Gastrocnemius medialis (tissue), 4 donors: ENCODE measurements at regions of chr11 and their contacts with region 1.

Region 1: DNA sequence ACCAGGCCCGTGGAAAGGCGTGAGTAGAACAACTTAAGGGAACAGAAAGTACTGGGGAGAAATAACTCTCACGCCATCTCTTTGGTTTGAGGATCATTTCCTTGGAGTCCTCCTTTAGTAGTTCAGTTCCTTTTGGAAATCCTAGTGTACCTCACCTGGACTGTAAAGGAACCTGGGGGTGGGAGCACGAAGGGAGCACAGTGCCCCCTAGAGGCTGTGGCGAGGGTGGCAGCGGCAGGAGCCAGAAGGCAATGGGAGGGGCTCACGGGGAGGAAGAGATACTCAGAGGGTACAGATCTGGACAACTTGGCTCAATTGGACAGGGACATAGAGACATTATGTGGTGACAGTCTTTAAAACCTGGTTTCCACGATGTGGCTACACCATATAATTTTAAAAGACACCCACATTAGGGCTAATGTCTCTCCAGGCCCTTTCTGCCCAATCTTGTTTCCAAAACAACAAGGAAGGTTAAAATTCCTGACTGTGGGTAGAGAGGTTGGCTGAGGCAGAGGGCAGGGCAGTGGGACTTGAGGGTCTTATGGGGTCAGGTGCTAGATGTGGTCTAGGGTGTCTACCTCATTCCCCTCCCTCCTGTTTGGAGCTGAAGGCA is 87.0 kb downstream of the CSNK2A3 start:
- DNase-seq: peak in 1 of 2 donors; percentile 38
- ATAC-seq: peak; percentile 55 to 81
- H3K4me3 ChIP-seq: no peak overlapping the region
- H3K27ac ChIP-seq: no peak overlapping the region
- H3K4me1 ChIP-seq: peaks cover 0 to 10% of the 10 kb centered on the region in 2 donors
- H3K27me3 ChIP-seq: no peaks in the 10 kb centered on the region
- CTCF ChIP-seq: peak; percentile 70 to 85 (median 76)
- POLR2A ChIP-seq: no peak

Region 2: DNA sequence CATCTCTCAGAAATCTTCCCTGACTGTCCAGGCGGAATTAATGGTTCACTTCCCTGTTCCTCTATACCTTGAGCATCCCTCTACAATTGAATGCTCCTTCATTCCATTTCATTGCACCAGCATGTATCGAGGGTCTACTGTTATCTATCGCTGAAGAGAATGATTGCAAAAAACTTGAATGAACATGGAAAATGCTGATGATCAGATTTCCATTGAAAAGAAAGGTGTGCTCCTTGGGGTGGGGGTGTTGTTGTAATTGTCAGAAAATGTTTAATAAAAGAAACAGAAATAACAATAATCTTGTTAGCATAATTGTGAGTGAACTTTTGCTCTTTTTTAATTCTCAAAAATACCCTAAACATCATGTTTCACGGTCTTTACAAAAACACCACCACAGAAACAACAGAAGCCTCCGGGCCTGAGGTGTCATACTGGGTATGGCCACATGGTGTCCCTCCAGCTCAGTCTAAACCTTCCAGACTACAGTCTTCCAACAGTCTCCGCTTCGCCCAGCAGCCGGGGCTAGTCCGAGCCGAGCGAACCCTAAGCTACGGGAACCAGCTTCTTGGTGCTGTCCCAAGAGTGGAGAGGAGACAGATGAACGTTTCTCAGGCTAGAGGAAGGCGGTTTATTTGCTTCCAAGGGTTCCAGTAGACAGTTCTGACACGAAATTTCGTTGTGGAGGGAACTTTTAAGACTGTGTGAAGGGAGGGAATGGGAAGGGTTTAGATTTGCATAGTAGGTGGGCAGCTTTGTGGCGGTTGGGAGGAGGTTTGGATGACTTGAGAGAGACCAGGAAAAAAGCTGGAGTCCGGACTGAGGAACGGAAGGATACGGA is 332.4 kb before region 1 on chr11:
- in situ Hi-C with region 1: loop called in 1 of 4 experiments (anchors 10 kb)
- intact Hi-C with region 1: loop called (anchors 5 kb)
- DNase-seq: peak; percentile 80 to 85
- ATAC-seq: peak; percentile 78 to 84
- H3K4me3 ChIP-seq: peak overlapping the region; percentile 45 to 65 (median 54)
- H3K27ac ChIP-seq: peak overlapping the region; percentile 64 to 84 (median 67)
- H3K4me1 ChIP-seq: peaks cover 6 to 7% of the 10 kb centered on the region in 2 donors
- H3K27me3 ChIP-seq: no peaks in the 10 kb centered on the region
- CTCF ChIP-seq: peak; percentile 92 to 98 (median 94)
- POLR2A ChIP-seq: no peak

Region 3: DNA sequence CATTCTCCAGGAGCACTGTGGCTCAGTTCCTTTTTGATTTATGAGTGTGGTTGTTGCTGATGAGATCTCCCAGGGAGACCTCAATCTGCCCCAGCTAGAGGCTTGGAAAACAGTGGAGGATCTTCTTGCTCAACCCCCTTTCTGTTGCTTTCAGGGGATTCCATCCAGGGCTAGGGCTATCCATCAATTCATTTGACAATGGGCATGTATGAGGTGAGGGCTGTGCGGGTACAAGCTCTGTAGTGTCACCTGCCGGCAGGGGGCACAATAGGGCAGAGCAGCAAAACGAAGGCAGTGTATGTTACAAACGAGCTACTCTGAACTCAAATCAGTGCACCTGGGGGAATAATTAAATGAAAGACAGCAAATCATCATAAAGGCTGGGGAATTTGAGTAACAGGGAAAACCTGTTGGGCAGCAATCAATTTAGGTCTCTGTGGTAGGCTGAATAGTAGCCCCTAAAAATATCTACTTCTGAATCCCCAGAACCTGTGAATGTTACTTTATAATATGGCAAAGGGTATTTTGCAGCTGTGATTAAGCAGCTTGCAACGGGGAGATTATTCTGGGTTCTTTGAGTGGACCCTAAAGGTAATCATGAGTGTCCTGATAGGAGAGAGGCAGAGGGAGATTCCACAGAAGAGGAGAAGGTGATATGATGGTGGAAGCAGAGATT is 237.9 kb before region 1 on chr11:
- in situ Hi-C with region 1: loop called in 2 of 4 experiments (anchors 5 to 25 kb)
- intact Hi-C with region 1: loop called (anchors 2 kb)
- DNase-seq: peak; percentile 38 to 53
- ATAC-seq: peak; percentile 82 to 94
- H3K4me3 ChIP-seq: no peak overlapping the region
- H3K27ac ChIP-seq: no peak overlapping the region
- H3K4me1 ChIP-seq: no peaks in the 10 kb centered on the region
- H3K27me3 ChIP-seq: no peaks in the 10 kb centered on the region
- CTCF ChIP-seq: peak; percentile 65 to 85 (median 72)
- POLR2A ChIP-seq: no peak

Region 4: DNA sequence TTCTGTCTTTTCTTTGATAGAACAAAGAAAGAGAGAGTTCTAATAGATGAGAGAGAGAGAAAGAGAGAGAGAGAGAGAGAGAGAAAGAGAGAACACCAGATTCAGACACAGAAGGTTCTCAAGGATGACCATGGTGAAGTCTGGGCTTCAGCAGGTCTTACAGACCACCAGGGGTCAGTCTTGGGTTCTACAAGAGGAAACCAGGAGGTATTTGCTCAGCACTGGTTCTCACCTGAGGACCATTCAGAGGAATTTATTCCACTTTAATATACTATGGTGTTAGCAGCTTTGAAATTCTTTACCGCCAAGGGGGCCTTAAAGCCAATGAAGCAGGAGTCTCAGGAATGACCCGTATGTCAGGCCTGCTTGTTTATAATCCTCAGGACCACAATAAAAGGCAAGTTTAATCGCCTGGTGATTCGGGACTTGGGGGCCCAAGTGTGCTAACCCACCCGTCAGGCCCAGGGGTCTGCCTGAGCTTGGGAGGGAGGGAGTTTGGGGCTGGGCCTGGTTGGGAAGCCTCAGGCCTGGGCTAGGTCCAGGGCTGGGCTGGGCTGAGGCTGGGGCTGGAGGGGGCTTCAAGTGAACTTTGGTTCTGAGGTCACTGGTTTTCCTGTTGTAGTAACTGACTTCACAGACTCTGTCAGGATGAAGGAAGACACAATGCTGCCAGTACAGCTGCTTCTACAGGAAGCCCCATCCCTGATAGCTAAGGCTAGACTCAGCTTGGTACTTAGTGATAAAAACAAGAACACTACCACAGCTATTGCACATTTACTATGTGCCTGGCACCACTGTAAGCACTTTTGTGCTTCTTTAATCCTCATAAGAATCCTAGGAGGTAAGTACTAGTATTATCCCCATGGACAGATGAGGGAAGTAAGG is 229.0 kb before region 1 on chr11:
- in situ Hi-C with region 1: loop called in 3 of 4 experiments (anchors 5 to 25 kb)
- intact Hi-C with region 1: loop called (anchors 1 kb)
- DNase-seq: peak; percentile 27 to 39
- ATAC-seq: peak; percentile 65 to 78
- H3K4me3 ChIP-seq: no peak overlapping the region
- H3K27ac ChIP-seq: peak overlapping the region; percentile 42 to 88 (median 76)
- H3K4me1 ChIP-seq: peaks cover 22 to 26% of the 10 kb centered on the region in 2 donors
- H3K27me3 ChIP-seq: no peaks in the 10 kb centered on the region
- CTCF ChIP-seq: peak; percentile 70 to 79 (median 76)
- POLR2A ChIP-seq: no peak

Region 5: DNA sequence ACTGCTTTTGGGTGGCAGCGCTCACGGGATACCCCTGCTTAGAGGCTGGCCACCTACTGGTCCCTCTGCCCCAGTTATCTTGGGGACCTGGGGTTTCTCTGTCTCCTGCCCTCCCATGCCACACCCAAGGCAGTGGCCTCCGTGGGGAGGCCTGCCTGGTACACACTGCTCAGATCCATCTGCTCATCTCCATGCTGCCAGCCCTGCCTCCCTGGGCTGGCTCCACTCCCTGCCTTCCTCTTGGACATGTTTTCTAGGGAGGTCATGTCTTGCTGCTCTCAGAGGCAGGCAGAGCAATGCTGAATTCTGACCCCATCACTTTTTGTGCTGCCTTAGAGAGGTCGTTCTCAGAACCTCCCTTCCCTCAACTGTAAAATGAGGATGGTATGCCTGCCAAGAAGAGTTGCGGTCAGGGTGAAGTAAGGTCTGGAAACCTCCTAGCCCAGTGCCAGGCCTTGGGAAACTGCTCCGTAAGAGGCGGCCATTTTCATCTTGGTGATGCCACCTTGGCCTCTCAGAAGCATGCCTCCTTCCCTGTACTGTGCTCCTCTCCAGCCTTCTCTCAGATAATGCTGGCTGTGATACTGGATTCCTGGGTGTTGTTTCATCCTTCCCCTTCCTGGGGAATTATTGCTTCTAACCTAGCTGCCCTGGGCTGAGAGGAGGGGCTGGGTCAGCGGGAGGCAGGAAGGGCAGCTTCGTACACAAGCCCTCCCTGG is 221.8 kb before region 1 on chr11:
- in situ Hi-C with region 1: loop called in 3 of 4 experiments (anchors 5 to 25 kb)
- intact Hi-C with region 1: no loop called
- DNase-seq: no peak
- ATAC-seq: peak; percentile 21 to 27
- H3K4me3 ChIP-seq: no peak overlapping the region
- H3K27ac ChIP-seq: no peak overlapping the region
- H3K4me1 ChIP-seq: peaks cover 0 to 1% of the 10 kb centered on the region in 2 donors
- H3K27me3 ChIP-seq: no peaks in the 10 kb centered on the region
- CTCF ChIP-seq: no peak
- POLR2A ChIP-seq: no peak

Region 6: GRCh38 chr11:11078344-11079086 is 187.6 kb before region 1 on chr11:
- in situ Hi-C with region 1: no loop called
- intact Hi-C with region 1: loop called (anchors 5 kb)
- DNase-seq: no peak
- ATAC-seq: peak; percentile 43 to 52
- H3K4me3 ChIP-seq: no peak overlapping the region
- H3K27ac ChIP-seq: peak overlapping the region in 1 of 4 donors; percentile 30
- H3K4me1 ChIP-seq: peaks cover 30 to 38% of the 10 kb centered on the region in 2 donors
- H3K27me3 ChIP-seq: no peaks in the 10 kb centered on the region
- CTCF ChIP-seq: peak in 2 of 5 experiments; percentile 9 to 14
- POLR2A ChIP-seq: no peak

Region 7: GRCh38 chr11:11171854-11172253 is 94.2 kb before region 1 on chr11:
- in situ Hi-C with region 1: no loop called
- intact Hi-C with region 1: loop called (anchors 2 kb)
- DNase-seq: no peak
- ATAC-seq: no peak
- H3K4me3 ChIP-seq: no peak overlapping the region
- H3K27ac ChIP-seq: peak overlapping the region; percentile 56 to 80 (median 74)
- H3K4me1 ChIP-seq: peaks cover 16 to 32% of the 10 kb centered on the region in 2 donors
- H3K27me3 ChIP-seq: no peaks in the 10 kb centered on the region
- CTCF ChIP-seq: no peak
- POLR2A ChIP-seq: no peak